Left cardiac atrium (tissue), 4 donors: ENCODE measurements at regions of chr4 and their contacts with region 1.

Region 1: DNA sequence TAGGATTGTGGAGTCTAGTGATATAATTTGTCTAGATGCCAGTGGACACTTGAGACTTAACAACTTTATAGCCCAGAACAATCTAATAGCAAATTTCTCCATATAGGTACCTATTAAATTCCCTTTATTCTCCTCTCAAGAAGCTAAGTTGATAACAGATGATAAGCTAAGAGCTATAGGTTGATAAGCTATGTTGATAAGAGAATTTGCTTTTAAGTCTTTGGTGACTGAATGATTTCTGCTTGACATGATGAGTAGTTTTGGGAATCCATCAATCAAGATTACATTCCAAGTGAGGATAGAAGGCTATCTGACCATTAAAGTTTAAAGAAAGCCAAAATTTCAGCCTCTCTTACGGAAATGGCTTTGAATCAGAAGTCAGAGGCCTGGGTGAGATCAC is 131.6 kb downstream of the EMCN start:
- DNase-seq: no peak
- ATAC-seq: no peak

Region 2: DNA sequence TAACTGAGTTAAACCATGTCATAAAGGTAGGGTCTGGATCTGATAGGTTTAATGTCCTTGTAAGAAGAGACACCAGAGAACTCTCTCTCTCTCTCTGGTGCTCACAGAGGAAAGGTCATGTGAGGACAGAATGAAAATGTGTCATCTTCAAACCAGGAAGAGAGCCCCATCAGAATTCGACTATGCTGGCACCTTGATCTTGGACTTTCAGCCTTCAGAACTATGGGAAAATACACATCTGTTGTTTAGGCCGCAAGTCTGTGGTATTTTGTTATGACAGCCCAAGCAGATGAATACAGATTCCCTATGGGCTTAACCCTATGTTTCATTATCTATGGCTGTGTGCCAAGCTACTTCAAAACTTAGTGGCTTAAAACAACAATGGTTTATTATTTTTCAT is 90.5 kb before region 1 on chr4:
- intact Hi-C with region 1: no loop called
- DNase-seq: no peak
- ATAC-seq: no peak

Region 3: GRCh38 chr4:100369871-100370270 is 16.4 kb before region 1 on chr4:
- intact Hi-C with region 1: loop called in 1 of 2 experiments (anchors 2 kb)
- DNase-seq: no peak
- ATAC-seq: no peak